Psoas muscle (tissue), 8 donors: ENCODE measurements at regions of chr6 and their contacts with region 1.

Region 1: GRCh38 chr6:57158658-57159057 is 13.5 kb upstream of the BAG2 start:
- DNase-seq: no peak
- ATAC-seq: no peak
- H3K4me3 ChIP-seq: no peak overlapping the region
- H3K27ac ChIP-seq: no peak overlapping the region
- H3K4me1 ChIP-seq: no peaks in the 10 kb centered on the region
- H3K27me3 ChIP-seq: no peaks in the 10 kb centered on the region
- CTCF ChIP-seq: no peak

Region 2: DNA sequence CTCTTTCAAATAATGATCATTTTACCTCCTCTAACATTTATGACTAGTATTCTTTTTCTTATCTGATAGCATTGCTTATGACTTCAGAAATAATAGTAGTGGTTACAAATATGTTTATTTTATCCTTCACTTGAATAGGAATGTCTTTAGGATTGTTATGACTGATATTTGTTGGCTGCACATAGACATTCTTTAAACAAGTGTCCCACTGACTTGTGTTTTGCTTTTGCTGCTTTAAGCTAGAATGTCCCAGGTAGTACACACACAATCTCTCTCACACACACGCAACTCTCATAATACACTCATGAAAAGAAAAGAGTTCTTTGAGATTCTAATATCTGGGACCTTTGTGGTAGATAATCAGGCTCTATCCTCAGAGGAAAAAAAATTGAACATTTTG is 90.6 kb before region 1 on chr6:
- intact Hi-C with region 1: no loop called
- DNase-seq: no peak
- ATAC-seq: no peak
- H3K4me3 ChIP-seq: no peak overlapping the region
- H3K27ac ChIP-seq: no peak overlapping the region
- H3K4me1 ChIP-seq: no peaks in the 10 kb centered on the region
- H3K27me3 ChIP-seq: no peaks in the 10 kb centered on the region
- CTCF ChIP-seq: no peak

Region 3: GRCh38 chr6:57109880-57110279 is 48.8 kb before region 1 on chr6:
- intact Hi-C with region 1: loop called in 1 of 2 experiments (anchors 10 kb)
- DNase-seq: no peak
- ATAC-seq: no peak
- H3K4me3 ChIP-seq: no peak overlapping the region
- H3K27ac ChIP-seq: no peak overlapping the region
- H3K4me1 ChIP-seq: peaks cover 6% of the 10 kb centered on the region
- H3K27me3 ChIP-seq: no peaks in the 10 kb centered on the region
- CTCF ChIP-seq: no peak

Region 4: DNA sequence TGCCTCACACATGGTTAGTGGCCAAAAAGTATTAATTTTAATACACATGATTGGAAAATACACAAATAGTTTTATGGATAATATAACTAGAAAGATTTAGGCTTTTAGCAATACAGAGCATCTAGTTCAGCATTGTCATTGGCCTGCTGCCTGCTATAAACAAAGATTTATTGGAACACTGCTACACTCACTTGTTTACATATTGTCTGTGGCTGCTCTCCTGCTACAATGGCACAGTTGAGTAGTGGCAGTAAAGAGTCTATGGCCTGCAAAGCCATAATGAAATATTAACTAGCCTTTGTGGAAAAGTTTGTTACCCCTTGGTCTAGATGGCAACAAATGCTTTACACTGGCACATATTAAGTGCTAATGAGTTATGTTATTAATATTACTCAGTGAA is 30.9 kb before region 1 on chr6:
- intact Hi-C with region 1: no loop called
- DNase-seq: no peak
- ATAC-seq: no peak
- H3K4me3 ChIP-seq: no peak overlapping the region
- H3K27ac ChIP-seq: no peak overlapping the region
- H3K4me1 ChIP-seq: peaks cover 5% of the 10 kb centered on the region
- H3K27me3 ChIP-seq: no peaks in the 10 kb centered on the region
- CTCF ChIP-seq: no peak

Region 5: GRCh38 chr6:57172136-57173055 is 13.7 kb after region 1 on chr6 and contains the start of gene BAG2:
- intact Hi-C with region 1: no loop called
- DNase-seq: peak; percentile 90 to 94
- ATAC-seq: peak; percentile 96 to 98 (median 96)
- H3K4me3 ChIP-seq: peak within 1 kb of the TSS; percentile 89
- H3K27ac ChIP-seq: peak within 1 kb of the TSS; percentile 93
- H3K4me1 ChIP-seq: peaks cover 12% of the 10 kb centered on the region
- H3K27me3 ChIP-seq: no peaks in the 10 kb centered on the region
- CTCF ChIP-seq: peak; percentile 38
- total RNA-seq, gene BAG2: 7.3 to 9.3 (median 8.5) TPM